Activated T-helper 1 cell treated with anti-CD3 and anti-CD28 coated beads, Interleukin-12 subunit alpha, Interleukin-12 subunit beta, Interleukin-2, Interleukin-4 antibody, amounts not matched to agents 30 ng/mL and 10 ng/mL and 1 ng/mL, durations not matched to agents 14 hours and 24 hours and 36 hours (primary cell): ENCODE measurements at regions of chr3 and their contacts with region 1.

Region 1: GRCh38 chr3:149657926-149658733 is at the start of gene WWTR1:
- DNase-seq: peak; percentile 34
- H3K4me3 Mint-ChIP-seq: peak within 1 kb of the TSS; percentile 84
- H3K27ac Mint-ChIP-seq: peak within 1 kb of the TSS; percentile 45
- H3K4me1 Mint-ChIP-seq: peaks cover 19% of the 10 kb centered on the region
- H3K27me3 Mint-ChIP-seq: peaks cover 50% of the 10 kb centered on the region
- total RNA-seq, gene WWTR1: 0.57 and 0.81 TPM in 2 replicates

Region 2: GRCh38 chr3:149575961-149576564 is 82.1 kb before region 1 on chr3:
- intact Hi-C with region 1: loop called (anchors 2 kb)
- DNase-seq: no peak
- H3K4me3 Mint-ChIP-seq: no peak overlapping the region
- H3K27ac Mint-ChIP-seq: peak overlapping the region; percentile 42
- H3K4me1 Mint-ChIP-seq: peaks cover 57% of the 10 kb centered on the region
- H3K27me3 Mint-ChIP-seq: no peaks in the 10 kb centered on the region

Region 3: DNA sequence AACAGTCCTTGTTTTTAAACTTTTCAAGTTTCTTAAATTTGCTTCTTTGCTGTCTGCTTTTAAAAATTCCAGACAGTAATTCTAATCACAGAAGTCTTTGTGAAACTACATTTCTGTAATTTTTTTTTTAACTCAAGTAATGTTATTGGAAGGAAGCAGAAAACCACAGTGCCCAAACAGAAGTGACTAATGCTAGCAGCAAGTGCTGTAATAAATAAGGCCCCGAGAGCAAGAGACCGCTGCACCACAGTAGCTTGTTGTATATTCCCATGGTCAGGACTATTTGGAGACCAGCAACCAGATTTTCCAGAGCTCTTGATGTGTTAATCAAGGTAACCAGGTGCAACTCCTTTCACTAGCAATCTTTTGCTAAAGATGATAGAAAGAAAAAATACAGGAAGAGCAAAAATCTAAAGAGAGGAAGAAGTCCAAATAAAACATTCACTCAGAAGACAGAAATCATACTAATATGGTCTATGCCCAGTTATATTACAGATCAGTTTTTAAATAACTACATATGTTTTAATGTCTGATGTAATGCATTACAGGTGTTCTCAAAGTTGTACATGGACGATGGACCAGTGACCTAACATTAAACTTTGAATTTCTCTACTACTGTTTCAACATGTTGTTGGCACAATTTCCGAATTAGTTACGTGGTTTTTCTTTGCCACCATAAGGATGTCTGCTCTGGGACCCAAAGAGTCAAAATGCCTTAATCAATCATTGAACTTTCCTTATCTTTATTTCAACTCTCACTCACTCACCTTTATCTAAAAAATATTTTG is 36.7 kb before region 1 on chr3:
- intact Hi-C with region 1: loop called (anchors 2 kb)
- DNase-seq: no peak
- H3K4me3 Mint-ChIP-seq: no peak overlapping the region
- H3K27ac Mint-ChIP-seq: peak overlapping the region; percentile 2
- H3K4me1 Mint-ChIP-seq: peaks cover 31% of the 10 kb centered on the region
- H3K27me3 Mint-ChIP-seq: peaks cover 10% of the 10 kb centered on the region

Region 4: GRCh38 chr3:149752051-149752787 is 94.1 kb after region 1 on chr3 and contains the start of gene COMMD2:
- intact Hi-C with region 1: loop called (anchors 2 kb)
- DNase-seq: peak; percentile 65
- H3K4me3 Mint-ChIP-seq: peak within 1 kb of the TSS; percentile 95
- H3K27ac Mint-ChIP-seq: peak within 1 kb of the TSS; percentile 59
- H3K4me1 Mint-ChIP-seq: peaks cover 14% of the 10 kb centered on the region
- H3K27me3 Mint-ChIP-seq: peaks cover 4% of the 10 kb centered on the region
- total RNA-seq, gene COMMD2: 44.2 and 44.8 TPM in 2 replicates